ENCODE measurements at regions of chr4 and their contacts with region 1.

Region 1: GRCh38 chr4:4269856-4270255 is 20.1 kb downstream of the LYAR start:
- DNase-seq: no peak
- H3K4me3 ChIP-seq: no peak overlapping the region
- H3K27ac ChIP-seq: no peak overlapping the region
- H3K4me1 ChIP-seq: no peaks in the 10 kb centered on the region
- H3K27me3 ChIP-seq: no peaks in the 10 kb centered on the region
- CTCF ChIP-seq: no peak

Region 2: GRCh38 chr4:3624523-3624922 is 645.3 kb before region 1 on chr4:
- CTCF ChIA-PET with region 1: no interaction called
- POLR2A ChIA-PET with region 1: no interaction called
- intact Hi-C with region 1: no loop called
- DNase-seq: no peak
- H3K4me3 ChIP-seq: no peak overlapping the region
- H3K27ac ChIP-seq: no peak overlapping the region
- H3K4me1 ChIP-seq: no peaks in the 10 kb centered on the region
- H3K27me3 ChIP-seq: no peaks in the 10 kb centered on the region
- CTCF ChIP-seq: no peak

Region 3: DNA sequence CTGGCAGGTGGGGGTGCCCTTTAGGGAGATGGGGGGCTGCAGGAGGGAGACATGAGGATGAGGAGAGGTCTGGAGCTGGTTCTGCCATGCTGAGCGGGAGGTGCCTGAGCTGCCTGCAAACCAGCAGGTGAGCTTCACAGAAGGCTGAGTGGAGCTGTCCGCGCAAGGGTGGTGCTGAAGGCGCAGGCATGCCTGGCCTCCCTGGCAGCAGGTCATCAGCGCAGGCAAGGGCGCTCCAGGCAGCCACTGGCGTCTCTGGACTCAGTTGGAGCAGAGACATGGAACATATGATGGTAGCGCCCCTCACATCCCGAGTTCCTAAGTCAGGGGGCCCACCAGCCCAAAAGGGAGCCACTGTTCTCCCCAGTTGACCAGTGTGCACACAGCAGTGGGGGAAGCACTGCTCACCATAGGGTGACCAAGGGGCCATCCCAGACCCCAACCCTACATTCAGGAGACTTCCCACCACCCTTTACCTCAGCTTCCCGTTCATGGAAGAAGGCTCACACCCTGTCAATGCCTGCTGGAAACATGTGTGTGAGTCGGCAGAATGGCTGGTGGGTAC is 477.8 kb before region 1 on chr4:
- CTCF ChIA-PET with region 1: no interaction called
- POLR2A ChIA-PET with region 1: no interaction called
- intact Hi-C with region 1: no loop called
- DNase-seq: peak; percentile 48
- H3K4me3 ChIP-seq: no peak overlapping the region
- H3K27ac ChIP-seq: no peak overlapping the region
- H3K4me1 ChIP-seq: no peaks in the 10 kb centered on the region
- H3K27me3 ChIP-seq: no peaks in the 10 kb centered on the region
- CTCF ChIP-seq: no peak

Region 4: GRCh38 chr4:3911252-3911856 is 358.5 kb before region 1 on chr4:
- CTCF ChIA-PET with region 1: no interaction called
- POLR2A ChIA-PET with region 1: no interaction called
- intact Hi-C with region 1: no loop called
- DNase-seq: no peak
- H3K4me3 ChIP-seq: no peak overlapping the region
- H3K27ac ChIP-seq: no peak overlapping the region
- H3K4me1 ChIP-seq: no peaks in the 10 kb centered on the region
- H3K27me3 ChIP-seq: no peaks in the 10 kb centered on the region
- CTCF ChIP-seq: no peak

Region 5: GRCh38 chr4:4233610-4234009 is 36.2 kb before region 1 on chr4:
- CTCF ChIA-PET with region 1: no interaction called
- POLR2A ChIA-PET with region 1: no interaction called
- intact Hi-C with region 1: no loop called
- DNase-seq: no peak
- H3K4me3 ChIP-seq: no peak overlapping the region
- H3K27ac ChIP-seq: no peak overlapping the region
- H3K4me1 ChIP-seq: no peaks in the 10 kb centered on the region
- H3K27me3 ChIP-seq: peaks cover 14% of the 10 kb centered on the region
- CTCF ChIP-seq: no peak

Region 6: GRCh38 chr4:5307928-5308327 is 1038.1 kb after region 1 on chr4:
- CTCF ChIA-PET with region 1: no interaction called
- POLR2A ChIA-PET with region 1: interaction called, 12 read pairs
- intact Hi-C with region 1: no loop called
- DNase-seq: no peak
- H3K4me3 ChIP-seq: no peak overlapping the region
- H3K27ac ChIP-seq: no peak overlapping the region
- H3K4me1 ChIP-seq: no peaks in the 10 kb centered on the region
- H3K27me3 ChIP-seq: no peaks in the 10 kb centered on the region
- CTCF ChIP-seq: no peak